Caco-2 (cell line): ENCODE measurements at regions of chr2 and their contacts with region 1.

Region 1: GRCh38 chr2:216013080-216013909 is at the start of gene MREG:
- DNase-seq: peak; percentile 87 to 91
- H3K4me3 ChIP-seq: peak within 1 kb of the TSS; percentile 97
- H3K4me3 Mint-ChIP-seq: peak within 1 kb of the TSS; percentile 84
- H3K27ac Mint-ChIP-seq: peak within 1 kb of the TSS; percentile 88
- H3K4me1 ChIP-seq: peaks cover 8% of the 10 kb centered on the region
- H3K4me1 Mint-ChIP-seq: peaks cover 26% of the 10 kb centered on the region
- H3K27me3 ChIP-seq: no peaks in the 10 kb centered on the region
- H3K27me3 Mint-ChIP-seq: no peaks in the 10 kb centered on the region
- CTCF ChIP-seq: peak; percentile 70 to 93
- total RNA-seq, gene MREG: 41.7 and 43.8 TPM in 2 replicates

Region 2: DNA sequence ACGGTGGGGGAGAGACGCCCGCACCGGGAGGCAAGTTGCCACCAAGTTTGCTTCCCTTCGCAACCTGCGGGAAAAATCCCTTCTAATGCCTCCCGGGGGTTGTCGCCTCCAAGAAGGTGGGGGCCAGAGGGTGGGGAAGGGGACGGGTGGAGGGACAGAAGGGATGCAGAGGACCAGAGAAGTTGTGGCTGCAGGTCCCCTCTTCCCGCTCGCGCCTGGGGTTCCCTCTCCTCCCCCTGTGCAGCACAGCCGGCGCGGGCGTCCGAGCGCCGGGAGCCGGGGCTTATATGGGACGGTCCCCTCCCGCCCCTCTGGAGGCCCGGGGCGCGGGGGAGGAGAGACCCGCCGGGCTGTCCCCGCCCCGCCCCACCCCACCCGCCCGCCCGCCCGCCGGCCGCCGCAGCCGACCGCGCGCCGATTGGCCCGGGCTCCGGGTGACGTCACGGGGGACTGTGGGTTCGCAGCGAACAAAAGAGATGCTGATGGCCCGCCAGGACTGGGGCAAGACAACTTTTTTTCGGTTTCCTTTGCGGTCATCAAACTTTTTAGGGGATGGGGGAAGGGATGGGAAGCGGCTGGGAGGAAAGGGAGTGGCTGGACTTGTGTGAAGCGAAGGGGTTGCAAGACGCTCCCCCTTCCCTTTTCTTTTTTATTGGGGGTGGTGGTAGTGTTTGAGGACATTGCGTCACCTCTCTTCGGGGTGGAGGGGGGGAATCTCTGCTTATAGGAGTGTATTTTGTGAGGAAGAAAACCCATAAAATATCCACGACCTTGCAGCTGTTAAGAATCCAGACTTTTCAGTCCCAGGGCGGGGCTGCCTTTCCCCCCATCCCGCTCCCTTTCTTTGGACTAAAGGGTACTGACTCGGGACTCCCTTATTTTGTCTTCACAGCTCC is 577.2 kb before region 1 on chr2 and contains the start of gene FN1:
- CTCF ChIA-PET with region 1: no interaction called
- POLR2A ChIA-PET with region 1: no interaction called
- intact Hi-C with region 1: loop called (anchors 5 kb)
- DNase-seq: peak; percentile 95 to 96
- H3K4me3 ChIP-seq: peak within 1 kb of the TSS; percentile 99
- H3K4me3 Mint-ChIP-seq: peak within 1 kb of the TSS; percentile 84
- H3K27ac Mint-ChIP-seq: peak within 1 kb of the TSS; percentile 94
- H3K4me1 ChIP-seq: peaks cover 40% of the 10 kb centered on the region
- H3K4me1 Mint-ChIP-seq: peaks cover 26% of the 10 kb centered on the region
- H3K27me3 ChIP-seq: no peaks in the 10 kb centered on the region
- H3K27me3 Mint-ChIP-seq: no peaks in the 10 kb centered on the region
- CTCF ChIP-seq: no peak
- total RNA-seq, gene FN1: 3,805 and 3,872 TPM in 2 replicates

Region 3: DNA sequence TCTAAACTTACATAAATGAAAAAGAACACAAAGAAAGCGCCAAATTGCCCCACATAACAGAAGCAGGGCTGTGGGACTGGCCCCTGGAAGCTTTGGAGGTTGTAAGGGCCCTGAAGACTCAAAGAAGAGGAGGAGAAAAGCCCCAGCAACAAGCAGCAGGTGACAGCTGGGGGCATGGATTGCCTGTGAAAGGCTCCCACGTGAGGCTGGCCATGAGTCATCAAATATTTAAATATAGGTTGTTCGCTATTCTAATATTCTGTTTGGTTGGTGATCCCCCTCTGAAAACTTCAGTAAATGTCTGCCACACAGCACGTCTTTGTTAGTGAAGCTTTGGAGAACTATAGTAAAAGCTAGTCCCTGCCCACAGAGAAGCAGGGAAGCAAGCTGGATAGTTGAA is 132.3 kb before region 1 on chr2:
- CTCF ChIA-PET with region 1: no interaction called
- POLR2A ChIA-PET with region 1: no interaction called
- intact Hi-C with region 1: no loop called
- DNase-seq: no peak
- H3K4me3 ChIP-seq: no peak overlapping the region
- H3K4me3 Mint-ChIP-seq: no peak overlapping the region
- H3K27ac Mint-ChIP-seq: no peak overlapping the region
- H3K4me1 ChIP-seq: peaks cover 33% of the 10 kb centered on the region
- H3K4me1 Mint-ChIP-seq: peaks cover 27% of the 10 kb centered on the region
- H3K27me3 ChIP-seq: no peaks in the 10 kb centered on the region
- H3K27me3 Mint-ChIP-seq: no peaks in the 10 kb centered on the region
- CTCF ChIP-seq: no peak

Region 4: GRCh38 chr2:215982080-215982875 is 31.0 kb before region 1 on chr2:
- CTCF ChIA-PET with region 1: no interaction called
- POLR2A ChIA-PET with region 1: no interaction called
- intact Hi-C with region 1: loop called (anchors 2 kb)
- DNase-seq: peak in 1 of 2 experiments; percentile 17
- H3K4me3 ChIP-seq: no peak overlapping the region
- H3K4me3 Mint-ChIP-seq: no peak overlapping the region
- H3K27ac Mint-ChIP-seq: no peak overlapping the region
- H3K4me1 ChIP-seq: no peaks in the 10 kb centered on the region
- H3K4me1 Mint-ChIP-seq: peaks cover 8% of the 10 kb centered on the region
- H3K27me3 ChIP-seq: no peaks in the 10 kb centered on the region
- H3K27me3 Mint-ChIP-seq: no peaks in the 10 kb centered on the region
- CTCF ChIP-seq: no peak